ENCODE measurements at regions of chr1 and their contacts with region 1.

Region 1: DNA sequence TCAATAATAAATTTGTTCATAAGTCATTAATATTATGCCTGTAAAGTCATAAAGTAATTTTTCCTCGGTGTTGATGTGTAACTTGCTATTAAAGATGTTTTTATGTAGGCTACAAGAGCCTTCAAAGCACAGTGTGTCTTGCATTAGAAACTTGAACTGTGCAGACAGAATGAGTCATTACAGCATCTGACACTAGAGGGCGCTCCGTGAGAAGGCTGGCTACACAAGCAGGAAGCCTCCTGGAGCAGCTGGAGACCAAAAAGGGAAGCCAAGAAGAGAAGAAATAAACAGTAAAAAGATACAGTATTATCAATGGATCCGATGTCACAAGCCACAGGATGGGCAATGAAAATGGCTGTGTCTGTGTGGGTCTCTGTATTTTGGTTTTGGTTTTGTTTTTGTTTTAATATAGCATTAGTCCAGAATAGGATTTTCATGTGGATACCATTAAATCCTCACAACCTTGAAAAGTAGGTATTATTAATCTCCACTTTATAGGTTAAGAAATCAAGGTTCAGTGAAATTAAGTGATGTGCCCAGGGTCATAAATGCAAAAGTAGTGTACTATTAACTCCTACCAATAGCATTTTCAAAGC is 16.1 kb upstream of the LRRC8D start:
- DNase-seq: peak; percentile 69 to 86
- ATAC-seq: peak; percentile 86 to 97 (median 92)
- H3K4me3 ChIP-seq: no peak overlapping the region
- H3K27ac ChIP-seq: no peak overlapping the region
- H3K4me1 ChIP-seq: no peaks in the 10 kb centered on the region
- H3K27me3 ChIP-seq: no peaks in the 10 kb centered on the region
- CTCF ChIP-seq: peak; percentile 94

Region 2: DNA sequence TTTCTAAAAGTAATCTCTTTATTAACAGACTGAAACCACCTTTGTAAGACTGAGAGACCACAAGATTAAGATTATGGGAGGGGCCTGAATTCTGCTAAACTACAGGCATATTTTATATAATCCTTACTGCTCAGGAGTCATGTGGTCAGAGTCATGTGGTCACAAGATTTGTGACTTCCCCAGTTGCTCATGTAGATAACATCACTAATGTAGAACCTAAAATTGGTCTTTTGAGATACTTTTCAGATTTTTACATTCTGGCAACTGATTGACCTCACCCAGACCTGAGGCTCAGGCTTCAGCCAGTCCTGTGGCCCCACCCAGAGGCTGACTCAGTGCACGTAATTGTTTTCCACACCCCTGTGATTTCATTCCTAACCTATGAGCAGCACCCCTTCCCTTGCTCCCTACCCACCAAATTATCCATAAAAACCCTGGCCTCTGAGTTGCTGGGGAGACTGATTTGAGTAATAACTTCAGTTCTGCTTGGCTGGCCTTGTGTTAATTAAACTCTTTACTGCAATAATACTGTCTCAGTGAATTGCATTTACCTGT is 148.4 kb after region 1 on chr1:
- intact Hi-C with region 1: loop called in 1 of 2 experiments (anchors 10 kb)
- DNase-seq: peak in 1 of 2 donors; percentile 50
- ATAC-seq: peak; percentile 64 to 90 (median 80)
- H3K4me3 ChIP-seq: no peak overlapping the region
- H3K27ac ChIP-seq: no peak overlapping the region
- H3K4me1 ChIP-seq: no peaks in the 10 kb centered on the region
- H3K27me3 ChIP-seq: no peaks in the 10 kb centered on the region
- CTCF ChIP-seq: peak; percentile 29

Region 3: GRCh38 chr1:89987170-89987819 is 182.6 kb after region 1 on chr1:
- intact Hi-C with region 1: loop called (anchors 1 to 2 kb)
- DNase-seq: no peak
- ATAC-seq: peak; percentile 83 to 98 (median 90)
- H3K4me3 ChIP-seq: no peak overlapping the region
- H3K27ac ChIP-seq: no peak overlapping the region
- H3K4me1 ChIP-seq: peaks cover 3% of the 10 kb centered on the region
- H3K27me3 ChIP-seq: no peaks in the 10 kb centered on the region
- CTCF ChIP-seq: peak; percentile 83